ENCODE measurements at regions of chr3 and their contacts with region 1.

Region 1: GRCh38 chr3:64109438-64109837 is 86.1 kb upstream of the PSMD6 start:
- DNase-seq: peak in 32 of 42 donors; percentile 10 to 71 (median 33)

Region 2: DNA sequence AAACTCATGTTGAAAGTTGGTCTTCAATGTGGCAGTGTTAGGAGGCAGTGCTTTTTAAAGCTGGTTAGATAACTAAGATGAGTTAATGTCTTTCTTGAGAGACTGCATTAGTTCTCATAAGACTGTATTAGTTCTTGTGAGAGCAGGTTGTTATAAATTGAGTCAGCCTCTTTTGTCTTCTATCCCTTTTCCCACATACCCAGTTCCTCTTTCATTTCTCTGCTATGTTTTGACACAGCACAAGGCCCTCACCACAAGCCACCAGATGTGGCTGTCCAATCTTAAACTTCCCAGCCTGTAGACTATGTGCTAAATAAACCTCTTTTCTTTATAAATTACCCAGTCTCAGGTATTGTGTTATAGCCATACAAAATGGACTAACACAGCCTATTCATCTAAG is 551.5 kb before region 1 on chr3:
- intact Hi-C with region 1: no loop called
- DNase-seq: no peak

Region 3: DNA sequence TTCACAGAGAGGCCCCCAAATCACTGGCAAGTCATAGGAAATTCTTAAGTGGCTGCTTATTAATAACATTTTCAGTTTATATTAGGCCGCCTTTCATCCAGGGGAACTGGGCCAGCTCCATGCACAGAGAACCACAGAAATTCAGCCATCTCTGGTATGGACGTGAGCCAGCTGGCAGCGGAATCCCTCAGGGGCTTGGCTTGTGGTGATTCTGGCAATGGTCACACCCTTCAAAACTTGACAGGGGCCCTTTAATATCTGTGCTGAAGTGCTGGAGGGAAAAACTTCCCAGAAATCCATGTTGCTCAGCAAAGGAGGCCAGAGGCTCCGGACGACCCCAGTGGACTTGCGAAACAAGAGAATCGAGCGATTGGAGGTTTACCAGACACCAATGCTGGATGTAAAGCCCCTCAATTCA is 104.5 kb after region 1 on chr3:
- intact Hi-C with region 1: loop called (anchors 10 kb)
- DNase-seq: peak in 9 of 42 donors; percentile 22 to 59 (median 34)